Colonic mucosa (tissue), 4 donors: ENCODE measurements at regions of chr7 and their contacts with region 1.

Region 1: DNA sequence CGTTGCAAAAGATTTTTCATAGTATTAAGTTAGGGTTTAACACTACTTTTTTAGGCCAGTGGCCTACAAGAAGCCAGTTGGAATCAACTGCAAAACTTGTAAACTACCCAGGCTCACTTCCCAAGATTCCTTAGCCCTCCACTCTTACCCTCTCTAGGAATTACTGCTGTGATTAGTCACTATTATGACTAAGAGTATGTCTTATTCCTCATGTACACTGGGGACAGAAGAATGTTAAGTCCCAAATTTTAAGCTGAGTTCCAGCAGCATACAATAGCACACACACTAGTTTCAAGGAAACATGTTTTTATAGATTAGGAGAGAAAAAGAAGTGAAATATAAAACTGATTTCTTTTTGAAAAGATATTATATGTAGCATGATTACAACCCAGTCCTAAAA is 42.8 kb downstream of the FBXL13 start:
- DNase-seq: no peak
- H3K4me3 ChIP-seq: no peak overlapping the region
- H3K27ac ChIP-seq: no peak overlapping the region
- H3K4me1 ChIP-seq: no peaks in the 10 kb centered on the region
- H3K27me3 ChIP-seq: no peaks in the 10 kb centered on the region
- CTCF ChIP-seq: no peak

Region 2: GRCh38 chr7:102874166-102874829 is 157.5 kb before region 1 on chr7:
- intact Hi-C with region 1: loop called (anchors 10 kb)
- DNase-seq: no peak
- H3K4me3 ChIP-seq: no peak overlapping the region
- H3K27ac ChIP-seq: no peak overlapping the region
- H3K4me1 ChIP-seq: no peaks in the 10 kb centered on the region
- H3K27me3 ChIP-seq: no peaks in the 10 kb centered on the region
- CTCF ChIP-seq: no peak

Region 3: DNA sequence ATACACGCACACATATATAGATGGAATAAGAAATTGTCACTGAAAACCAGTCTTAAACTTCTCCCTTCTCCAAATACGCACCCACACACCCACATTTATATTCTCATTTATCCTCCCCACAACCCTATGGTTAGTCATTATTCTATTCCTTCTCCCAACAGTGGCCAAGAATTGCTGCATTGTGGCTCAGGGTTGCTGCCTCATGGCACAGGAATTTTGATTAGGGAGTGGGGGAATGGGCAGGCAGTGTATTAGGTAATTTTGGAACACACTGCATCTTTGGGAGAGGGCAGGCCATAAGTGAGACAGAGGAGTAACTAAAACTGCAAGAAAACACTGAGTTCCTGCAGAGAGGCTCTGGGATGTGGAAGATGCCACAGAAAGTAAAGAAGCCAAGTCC is 81.4 kb after region 1 on chr7:
- intact Hi-C with region 1: no loop called
- DNase-seq: no peak
- H3K4me3 ChIP-seq: no peak overlapping the region
- H3K27ac ChIP-seq: no peak overlapping the region
- H3K4me1 ChIP-seq: no peaks in the 10 kb centered on the region
- H3K27me3 ChIP-seq: no peaks in the 10 kb centered on the region
- CTCF ChIP-seq: no peak